Right cardiac atrium (tissue), 5 donors: ENCODE measurements at regions of chr5 and their contacts with region 1.

Region 1: GRCh38 chr5:134904630-134905245 is at the start of gene PCBD2:
- DNase-seq: peak; percentile 93 to 97 (median 97)
- ATAC-seq: peak; percentile 94 to 96
- H3K4me3 ChIP-seq: peak within 1 kb of the TSS; percentile 71
- H3K27ac ChIP-seq: peak within 1 kb of the TSS; percentile 93
- H3K4me1 ChIP-seq: no peaks in the 10 kb centered on the region
- H3K27me3 ChIP-seq: no peaks in the 10 kb centered on the region
- total RNA-seq, gene PCBD2: 13.6 to 17.5 (median 14.9) TPM

Region 2: GRCh38 chr5:134738133-134738962 is 166.4 kb before region 1 on chr5 and contains the start of gene CAMLG:
- intact Hi-C with region 1: loop called in 1 of 4 experiments (anchors 5 kb)
- DNase-seq: peak; percentile 99 to 100 (median 99)
- ATAC-seq: peak; percentile 100
- H3K4me3 ChIP-seq: peak within 1 kb of the TSS; percentile 71
- H3K27ac ChIP-seq: peak within 1 kb of the TSS; percentile 82
- H3K4me1 ChIP-seq: no peaks in the 10 kb centered on the region
- H3K27me3 ChIP-seq: no peaks in the 10 kb centered on the region
- total RNA-seq, gene CAMLG: 20.8 to 24.8 (median 23.6) TPM

Region 3: DNA sequence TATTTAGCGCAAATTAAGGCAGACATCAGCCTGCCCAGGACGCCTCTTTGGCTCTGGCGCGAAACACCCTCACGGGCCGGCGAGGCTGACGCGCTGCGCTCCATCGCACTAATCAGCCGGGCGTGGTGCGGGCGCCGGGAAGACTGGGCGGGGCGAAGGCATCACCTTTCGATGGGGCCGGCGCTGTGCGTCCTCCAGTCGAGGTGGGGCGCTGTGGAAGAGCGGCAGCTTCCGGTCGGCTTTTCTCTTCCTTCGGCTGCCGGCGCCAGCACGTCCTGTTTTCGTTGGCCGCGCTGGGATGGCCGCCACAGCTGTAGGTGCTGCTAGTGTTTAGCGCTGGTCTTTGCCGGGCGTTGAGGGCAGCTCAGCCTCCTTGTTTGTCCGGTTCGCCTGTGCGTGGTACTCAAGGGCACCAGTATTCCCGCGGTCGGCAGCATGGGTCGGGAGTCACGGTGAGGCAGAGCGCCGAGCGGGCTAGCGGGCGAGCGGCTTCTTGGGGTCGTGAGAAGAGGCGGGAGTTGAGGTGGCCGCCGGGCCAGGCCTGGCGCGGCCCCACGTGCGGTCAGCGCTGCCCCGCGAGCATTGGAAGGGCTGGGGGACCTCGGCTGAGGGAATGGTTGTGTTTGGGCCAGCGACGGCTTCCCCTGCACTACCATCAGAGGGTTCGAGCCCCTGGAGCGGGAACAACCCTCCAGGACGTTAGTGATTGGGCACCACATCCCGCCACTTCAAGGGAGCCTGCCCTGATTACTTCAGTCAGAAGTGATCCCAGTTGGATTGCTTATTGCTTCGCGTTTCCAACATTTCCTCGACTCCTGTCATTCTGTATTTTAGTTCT is 146.0 kb before region 1 on chr5 and contains the start of gene DDX46:
- intact Hi-C with region 1: loop called in 1 of 4 experiments (anchors 10 kb)
- DNase-seq: peak; percentile 94 to 97 (median 97)
- ATAC-seq: peak; percentile 99
- H3K4me3 ChIP-seq: peak within 1 kb of the TSS; percentile 65
- H3K27ac ChIP-seq: peak within 1 kb of the TSS; percentile 22
- H3K4me1 ChIP-seq: peaks cover 2% of the 10 kb centered on the region
- H3K27me3 ChIP-seq: no peaks in the 10 kb centered on the region
- total RNA-seq, gene DDX46: 20.6 to 31.1 (median 26.0) TPM

Region 4: GRCh38 chr5:134845852-134846640 is 58.7 kb before region 1 on chr5 and contains the start of gene C5orf24:
- intact Hi-C with region 1: loop called in 1 of 4 experiments (anchors 10 kb)
- DNase-seq: peak; percentile 96 to 99 (median 98)
- ATAC-seq: peak; percentile 99
- H3K4me3 ChIP-seq: peak within 1 kb of the TSS; percentile 70
- H3K27ac ChIP-seq: peak within 1 kb of the TSS; percentile 87
- H3K4me1 ChIP-seq: peaks cover 2% of the 10 kb centered on the region
- H3K27me3 ChIP-seq: no peaks in the 10 kb centered on the region
- total RNA-seq, gene C5orf24: 29.4 to 34.1 (median 31.7) TPM

Region 5: GRCh38 chr5:135072387-135073281 is 167.9 kb after region 1 on chr5:
- intact Hi-C with region 1: no loop called
- DNase-seq: no peak
- ATAC-seq: no peak
- H3K4me3 ChIP-seq: no peak overlapping the region
- H3K27ac ChIP-seq: no peak overlapping the region
- H3K4me1 ChIP-seq: no peaks in the 10 kb centered on the region
- H3K27me3 ChIP-seq: no peaks in the 10 kb centered on the region